Thyroid gland (tissue), 4 donors: ENCODE measurements at regions of chr1 and their contacts with region 1.

Region 1: DNA sequence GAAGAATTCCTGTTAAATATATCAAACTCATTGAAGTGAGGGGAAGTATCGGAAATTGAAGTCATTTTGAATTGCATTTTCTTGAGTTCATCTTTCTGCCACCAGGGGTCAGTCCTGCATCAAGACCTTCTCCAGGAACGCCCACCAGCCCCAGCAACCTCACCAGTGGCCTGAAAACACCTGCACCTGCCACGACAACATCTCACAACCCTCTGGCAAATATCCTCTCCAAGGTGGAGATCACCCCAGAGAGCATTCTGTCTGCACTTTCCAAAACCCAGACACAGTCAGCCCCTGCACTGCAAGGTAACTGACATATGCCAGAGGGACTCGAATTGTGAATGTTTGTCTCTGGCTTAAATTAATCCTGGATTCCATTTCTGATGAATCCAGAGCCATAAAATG is 22.8 kb upstream of the TARS2 start:
- DNase-seq: peak; percentile 63
- H3K4me3 ChIP-seq: no peak overlapping the region
- H3K27ac ChIP-seq: no peak overlapping the region
- H3K4me1 ChIP-seq: peaks cover 9 to 14% of the 10 kb centered on the region in 2 donors
- H3K27me3 ChIP-seq: no peaks in the 10 kb centered on the region
- CTCF ChIP-seq: peak; percentile 43 to 81 (median 65)
- POLR2A ChIP-seq: no peak

Region 2: GRCh38 chr1:150106341-150106740 is 358.1 kb before region 1 on chr1:
- intact Hi-C with region 1: no loop called
- DNase-seq: no peak
- H3K4me3 ChIP-seq: no peak overlapping the region
- H3K27ac ChIP-seq: no peak overlapping the region
- H3K4me1 ChIP-seq: no peaks in the 10 kb centered on the region
- H3K27me3 ChIP-seq: no peaks in the 10 kb centered on the region
- CTCF ChIP-seq: no peak
- POLR2A ChIP-seq: no peak

Region 3: GRCh38 chr1:150363426-150364230 is 100.8 kb before region 1 on chr1 and contains the start of gene RPRD2:
- intact Hi-C with region 1: loop called (anchors 10 kb)
- DNase-seq: peak; percentile 100
- H3K4me3 ChIP-seq: peak within 1 kb of the TSS; percentile 66 to 88 (median 73)
- H3K27ac ChIP-seq: peak within 1 kb of the TSS; percentile 93 to 97 (median 96)
- H3K4me1 ChIP-seq: peaks cover 10 to 18% of the 10 kb centered on the region in 2 donors
- H3K27me3 ChIP-seq: no peaks in the 10 kb centered on the region
- CTCF ChIP-seq: peak in 1 of 6 experiments; percentile 20
- POLR2A ChIP-seq: peak in 1 of 2 donors; percentile 81
- total RNA-seq, gene RPRD2: 26.1 to 39.9 (median 31.6) TPM

Region 4: GRCh38 chr1:150532868-150533302 is 68.5 kb after region 1 on chr1:
- intact Hi-C with region 1: loop called (anchors 2 kb)
- DNase-seq: peak; percentile 88 to 90
- H3K4me3 ChIP-seq: no peak overlapping the region
- H3K27ac ChIP-seq: peak overlapping the region in 2 of 3 donors; percentile 60 to 62
- H3K4me1 ChIP-seq: peaks cover 7 to 22% of the 10 kb centered on the region in 2 donors
- H3K27me3 ChIP-seq: no peaks in the 10 kb centered on the region
- CTCF ChIP-seq: peak in 1 of 6 experiments; percentile 3
- POLR2A ChIP-seq: peak in 1 of 2 donors; percentile 11